ENCODE measurements at regions of chr10 and their contacts with region 1.

Region 1: GRCh38 chr10:13787015-13787421 is 200.3 kb downstream of the PRPF18 start:
- DNase-seq: peak; percentile 37 to 94 (median 91)
- ATAC-seq: peak; percentile 94
- H3K4me3 ChIP-seq: peak overlapping the region; percentile 17
- H3K4me3 Mint-ChIP-seq: peak overlapping the region in 9 of 10 donors; percentile 76 to 88 (median 84)
- H3K27ac ChIP-seq: peak overlapping the region; percentile 93
- H3K27ac Mint-ChIP-seq: no peak overlapping the region
- H3K4me1 ChIP-seq: peaks cover 29 to 50% of the 10 kb centered on the region in 2 donors
- H3K4me1 Mint-ChIP-seq: peaks cover 11 to 37% (median 20%) of the 10 kb centered on the region in 7 donors
- H3K27me3 ChIP-seq: no peaks in the 10 kb centered on the region
- H3K27me3 Mint-ChIP-seq: no peaks in the 10 kb centered on the region

Region 2: DNA sequence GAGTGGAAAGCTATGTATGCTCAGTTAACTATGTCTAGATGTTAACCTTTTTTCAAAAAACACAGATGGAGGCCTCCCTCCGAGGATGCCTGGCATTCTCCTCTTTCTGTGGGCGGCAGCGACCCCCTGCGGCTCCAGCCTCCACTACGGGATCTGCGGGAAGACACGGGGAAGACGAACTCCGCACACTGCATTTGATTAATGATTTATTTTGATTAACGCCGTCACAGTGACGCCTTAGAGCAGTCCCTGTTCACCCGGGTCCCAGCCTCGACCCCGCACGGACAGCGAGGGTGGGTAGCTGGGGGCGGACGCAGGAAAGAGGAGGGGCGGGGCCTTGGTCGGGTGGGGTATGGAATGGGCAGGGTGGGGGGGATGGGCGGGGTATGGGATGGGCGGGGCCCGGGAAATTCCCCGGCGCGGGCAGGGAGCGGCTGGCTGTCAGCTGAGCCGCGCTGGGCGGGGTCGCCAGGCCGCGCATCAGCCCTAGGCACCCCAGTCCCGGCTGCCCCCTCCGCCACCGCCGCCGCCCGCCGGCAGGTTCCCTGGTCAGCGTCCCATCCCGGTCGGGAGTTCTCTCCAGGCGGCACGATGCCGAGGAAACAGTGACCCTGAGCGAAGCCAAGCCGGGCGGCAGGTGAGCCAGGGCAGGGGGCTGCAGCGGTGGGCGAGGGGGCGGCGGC is 687.2 kb before region 1 on chr10 and contains the start of gene OPTN:
- CTCF ChIA-PET with region 1: no interaction called
- POLR2A ChIA-PET with region 1: no interaction called
- intact Hi-C with region 1: loop called in 1 of 2 experiments (anchors 2 kb)
- DNase-seq: peak; percentile 61 to 85 (median 80)
- ATAC-seq: peak; percentile 90
- H3K4me3 ChIP-seq: peak within 1 kb of the TSS; percentile 82
- H3K4me3 Mint-ChIP-seq: peak within 1 kb of the TSS; percentile 83 to 97 (median 96)
- H3K27ac ChIP-seq: peak within 1 kb of the TSS; percentile 92
- H3K27ac Mint-ChIP-seq: peak within 1 kb of the TSS; percentile 88 to 98 (median 94)
- H3K4me1 ChIP-seq: peaks cover 6 to 21% of the 10 kb centered on the region in 2 donors
- H3K4me1 Mint-ChIP-seq: peaks cover 28 to 52% (median 49%) of the 10 kb centered on the region in 7 donors
- H3K27me3 ChIP-seq: no peaks in the 10 kb centered on the region
- H3K27me3 Mint-ChIP-seq: no peaks in the 10 kb centered on the region
- total RNA-seq, gene OPTN: 59.3 to 146 (median 60.0) TPM

Region 3: GRCh38 chr10:13586676-13587355 is 200.2 kb before region 1 on chr10 and contains the start of gene PRPF18:
- CTCF ChIA-PET with region 1: no interaction called
- POLR2A ChIA-PET with region 1: no interaction called
- intact Hi-C with region 1: loop called in 1 of 2 experiments (anchors 1 kb)
- DNase-seq: peak; percentile 87 to 96 (median 93)
- ATAC-seq: peak; percentile 100
- H3K4me3 ChIP-seq: peak within 1 kb of the TSS; percentile 96
- H3K4me3 Mint-ChIP-seq: peak within 1 kb of the TSS; percentile 95 to 100 (median 100)
- H3K27ac ChIP-seq: peak within 1 kb of the TSS; percentile 74
- H3K27ac Mint-ChIP-seq: peak within 1 kb of the TSS; percentile 91 to 100 (median 98)
- H3K4me1 ChIP-seq: peaks cover 8 to 13% of the 10 kb centered on the region in 2 donors
- H3K4me1 Mint-ChIP-seq: peaks cover 15 to 49% (median 40%) of the 10 kb centered on the region in 7 donors
- H3K27me3 ChIP-seq: no peaks in the 10 kb centered on the region
- H3K27me3 Mint-ChIP-seq: peaks cover 9 to 27% (median 16%) of the 10 kb centered on the region in 5 donors
- total RNA-seq, gene PRPF18: 20.2 to 30.0 (median 27.0) TPM

Region 4: DNA sequence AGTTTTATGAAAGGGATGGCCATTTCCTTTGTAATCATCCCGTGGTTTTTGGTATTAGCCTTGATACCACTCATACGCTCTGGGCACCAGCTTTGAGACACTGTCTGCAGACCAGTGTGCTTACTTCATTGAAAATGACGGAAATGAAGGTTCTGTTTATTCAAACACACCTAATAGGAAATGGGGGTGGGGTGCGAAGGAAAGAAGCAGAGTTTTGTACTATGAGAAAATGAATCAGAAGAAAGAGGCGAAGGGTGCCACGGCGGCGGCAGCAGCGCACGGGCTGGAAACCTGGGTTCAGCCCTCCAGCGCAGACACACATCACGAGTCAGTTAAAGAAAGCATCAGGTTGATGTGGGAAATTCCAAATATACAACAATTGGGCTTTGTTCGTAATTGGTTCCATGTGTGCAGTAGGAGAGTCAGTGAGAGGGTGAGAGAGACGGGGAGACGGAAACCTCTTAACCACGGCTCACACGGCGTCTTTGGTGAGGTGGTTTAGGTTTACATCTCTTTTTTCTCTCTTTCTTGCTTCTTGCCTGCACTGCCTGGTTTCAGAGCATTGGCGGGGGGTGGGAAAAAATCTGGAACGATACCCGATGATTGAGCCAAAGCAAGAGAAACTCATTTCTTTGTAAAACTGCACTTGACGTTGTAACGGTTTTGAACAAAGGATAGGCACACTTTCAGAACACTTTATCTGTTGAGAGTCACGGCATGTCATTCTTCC is 222.5 kb after region 1 on chr10:
- CTCF ChIA-PET with region 1: no interaction called
- POLR2A ChIA-PET with region 1: no interaction called
- intact Hi-C with region 1: loop called (anchors 1 to 2 kb)
- DNase-seq: peak; percentile 28 to 86 (median 78)
- ATAC-seq: peak; percentile 93
- H3K4me3 ChIP-seq: peak overlapping the region; percentile 44
- H3K4me3 Mint-ChIP-seq: peak overlapping the region; percentile 76 to 94 (median 86)
- H3K27ac ChIP-seq: peak overlapping the region; percentile 66
- H3K27ac Mint-ChIP-seq: peak overlapping the region; percentile 84 to 95 (median 91)
- H3K4me1 ChIP-seq: peaks cover 22 to 28% of the 10 kb centered on the region in 2 donors
- H3K4me1 Mint-ChIP-seq: peaks cover 24 to 75% (median 54%) of the 10 kb centered on the region in 7 donors
- H3K27me3 ChIP-seq: no peaks in the 10 kb centered on the region
- H3K27me3 Mint-ChIP-seq: peaks cover 0 to 30% (median 0%) of the 10 kb centered on the region in 5 donors

Region 5: GRCh38 chr10:14048930-14049613 is 262.1 kb after region 1 on chr10:
- CTCF ChIA-PET with region 1: no interaction called
- POLR2A ChIA-PET with region 1: no interaction called
- intact Hi-C with region 1: no loop called
- DNase-seq: no peak
- ATAC-seq: no peak
- H3K4me3 ChIP-seq: no peak overlapping the region
- H3K4me3 Mint-ChIP-seq: no peak overlapping the region
- H3K27ac ChIP-seq: no peak overlapping the region
- H3K27ac Mint-ChIP-seq: no peak overlapping the region
- H3K4me1 ChIP-seq: no peaks in the 10 kb centered on the region
- H3K4me1 Mint-ChIP-seq: no peaks in the 10 kb centered on the region
- H3K27me3 ChIP-seq: no peaks in the 10 kb centered on the region
- H3K27me3 Mint-ChIP-seq: no peaks in the 10 kb centered on the region

Region 6: DNA sequence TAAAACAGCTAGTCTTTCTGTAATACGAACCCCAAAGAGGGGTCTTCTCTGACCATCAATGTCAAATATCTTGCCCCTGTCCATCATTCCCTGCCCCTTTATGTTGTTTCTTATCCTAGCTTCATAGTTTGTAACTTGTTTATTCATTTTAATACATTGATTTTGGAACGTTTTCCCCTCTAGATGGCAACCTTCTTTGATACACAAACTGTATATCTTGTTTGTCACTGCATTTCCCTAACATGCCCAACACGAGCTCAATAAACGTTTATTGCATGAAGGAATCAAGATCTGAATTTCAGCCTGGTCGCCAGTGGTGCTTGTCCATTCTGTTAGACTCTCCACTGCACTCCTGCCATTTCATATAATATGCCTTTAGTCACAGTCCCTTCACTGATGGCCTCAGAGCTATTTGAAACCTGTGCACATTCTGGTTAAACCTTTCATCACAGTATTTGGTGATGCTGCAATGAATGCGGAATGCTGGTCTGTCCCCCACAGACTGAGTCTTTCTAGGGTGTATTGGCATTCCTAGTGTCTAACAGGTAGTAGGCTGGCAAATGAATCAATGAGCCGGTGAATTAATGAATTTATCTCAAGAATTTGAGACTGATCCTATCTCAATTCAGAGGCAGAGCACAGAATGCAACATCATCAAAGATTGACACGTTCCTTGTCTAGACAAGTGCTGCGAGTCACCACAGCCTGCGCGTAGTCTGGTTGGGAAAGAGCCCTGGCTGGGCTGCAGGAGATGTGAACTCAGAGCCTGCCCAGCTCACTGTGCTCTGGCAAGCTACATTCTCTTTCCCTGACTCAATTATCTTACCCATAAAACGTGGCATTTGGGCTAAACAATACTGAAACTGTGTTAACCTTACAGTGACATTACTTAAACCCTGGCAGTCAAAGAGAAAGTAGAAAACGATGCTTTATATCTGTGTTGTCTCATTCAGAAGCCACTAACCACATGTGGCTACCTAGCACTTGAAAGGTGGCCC is 598.9 kb after region 1 on chr10:
- CTCF ChIA-PET with region 1: no interaction called
- POLR2A ChIA-PET with region 1: no interaction called
- intact Hi-C with region 1: no loop called
- DNase-seq: no peak
- ATAC-seq: no peak
- H3K4me3 ChIP-seq: no peak overlapping the region
- H3K4me3 Mint-ChIP-seq: peak overlapping the region in 2 of 10 donors; percentile 7 to 28
- H3K27ac ChIP-seq: no peak overlapping the region
- H3K27ac Mint-ChIP-seq: peak overlapping the region in 3 of 9 donors; percentile 7 to 36 (median 23)
- H3K4me1 ChIP-seq: peaks cover 0 to 50% of the 10 kb centered on the region in 2 donors
- H3K4me1 Mint-ChIP-seq: peaks cover 24 to 75% (median 63%) of the 10 kb centered on the region in 7 donors
- H3K27me3 ChIP-seq: peaks cover 0 to 3% of the 10 kb centered on the region in 2 donors
- H3K27me3 Mint-ChIP-seq: peaks cover 0 to 50% (median 0%) of the 10 kb centered on the region in 5 donors

Region 7: DNA sequence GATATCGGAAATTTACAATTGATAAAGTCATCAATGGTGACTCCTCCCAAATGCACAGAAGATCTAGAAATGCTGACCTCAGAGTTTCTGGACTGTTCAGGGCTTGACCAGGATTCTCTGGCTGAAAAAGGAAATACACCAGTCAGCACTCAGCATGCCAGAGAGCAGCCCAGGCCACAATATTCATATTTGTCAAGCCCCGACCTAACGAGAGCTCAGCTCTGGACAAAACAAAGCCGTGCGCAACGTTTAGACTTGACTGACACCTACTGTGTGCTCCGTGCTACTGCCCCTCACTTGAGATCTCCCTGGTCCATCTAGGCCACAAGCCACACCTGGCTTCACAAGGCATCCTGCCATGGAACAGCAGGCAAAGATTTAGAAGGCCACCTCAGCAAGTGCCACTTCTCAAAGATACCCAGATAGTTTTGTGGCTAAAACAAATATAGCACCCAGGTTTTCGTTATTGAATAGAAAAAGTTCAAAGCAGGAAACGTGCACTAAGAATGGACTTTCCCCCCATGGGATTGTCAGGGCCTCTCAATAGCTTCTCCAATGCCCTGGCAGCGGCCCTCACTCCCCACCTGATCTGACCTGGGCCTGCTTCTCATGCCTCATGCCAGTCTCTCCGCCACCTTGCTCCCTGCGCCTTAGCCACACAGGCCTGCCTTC is 769.4 kb after region 1 on chr10:
- CTCF ChIA-PET with region 1: no interaction called
- POLR2A ChIA-PET with region 1: interaction called, 4 read pairs
- intact Hi-C with region 1: loop called (anchors 5 kb)
- DNase-seq: no peak
- ATAC-seq: peak; percentile 47
- H3K4me3 ChIP-seq: no peak overlapping the region
- H3K4me3 Mint-ChIP-seq: peak overlapping the region; percentile 9 to 86 (median 73)
- H3K27ac ChIP-seq: peak overlapping the region; percentile 37
- H3K27ac Mint-ChIP-seq: peak overlapping the region; percentile 52 to 97 (median 93)
- H3K4me1 ChIP-seq: peaks cover 90 to 94% of the 10 kb centered on the region in 2 donors
- H3K4me1 Mint-ChIP-seq: peaks cover 84 to 100% (median 92%) of the 10 kb centered on the region in 7 donors
- H3K27me3 ChIP-seq: no peaks in the 10 kb centered on the region
- H3K27me3 Mint-ChIP-seq: no peaks in the 10 kb centered on the region

Region 8: GRCh38 chr10:14837757-14838581 is 1051.0 kb after region 1 on chr10 and contains the starts of genes CDNF, HSPA14 and MSANTD7:
- CTCF ChIA-PET with region 1: no interaction called
- POLR2A ChIA-PET with region 1: interaction called, 6 read pairs
- intact Hi-C with region 1: loop called (anchors 1 to 5 kb)
- DNase-seq: peak; percentile 98 to 99 (median 99)
- ATAC-seq: peak; percentile 98
- H3K4me3 ChIP-seq: peak within 1 kb of the TSS; percentile 88
- H3K4me3 Mint-ChIP-seq: peak within 1 kb of the TSS; percentile 87 to 98 (median 97)
- H3K27ac ChIP-seq: peak within 1 kb of the TSS; percentile 94
- H3K27ac Mint-ChIP-seq: peak within 1 kb of the TSS; percentile 92 to 99 (median 97)
- H3K4me1 ChIP-seq: peaks cover 15 to 17% of the 10 kb centered on the region in 2 donors
- H3K4me1 Mint-ChIP-seq: peaks cover 14 to 45% (median 32%) of the 10 kb centered on the region in 7 donors
- H3K27me3 ChIP-seq: no peaks in the 10 kb centered on the region
- H3K27me3 Mint-ChIP-seq: no peaks in the 10 kb centered on the region
- total RNA-seq, gene CDNF: 1.0 to 8.4 (median 4.9) TPM
- total RNA-seq, gene HSPA14: 14.1 to 23.8 (median 17.6) TPM
- total RNA-seq, gene MSANTD7: 16.2 to 31.4 (median 21.9) TPM